Gastrocnemius medialis (tissue), 4 donors: ENCODE measurements at regions of chr20 and their contacts with region 1.

Region 1: GRCh38 chr20:2206957-2207769 is 88.6 kb upstream of the TGM3 start:
- DNase-seq: peak; percentile 18 to 30
- ATAC-seq: no peak
- H3K4me3 ChIP-seq: peak overlapping the region; percentile 47 to 63 (median 56)
- H3K27ac ChIP-seq: no peak overlapping the region
- H3K4me1 ChIP-seq: peaks cover 0 to 4% of the 10 kb centered on the region in 2 donors
- H3K27me3 ChIP-seq: peaks cover 20 to 30% (median 28%) of the 10 kb centered on the region in 3 donors
- CTCF ChIP-seq: peak; percentile 8 to 81 (median 57)
- POLR2A ChIP-seq: no peak

Region 2: DNA sequence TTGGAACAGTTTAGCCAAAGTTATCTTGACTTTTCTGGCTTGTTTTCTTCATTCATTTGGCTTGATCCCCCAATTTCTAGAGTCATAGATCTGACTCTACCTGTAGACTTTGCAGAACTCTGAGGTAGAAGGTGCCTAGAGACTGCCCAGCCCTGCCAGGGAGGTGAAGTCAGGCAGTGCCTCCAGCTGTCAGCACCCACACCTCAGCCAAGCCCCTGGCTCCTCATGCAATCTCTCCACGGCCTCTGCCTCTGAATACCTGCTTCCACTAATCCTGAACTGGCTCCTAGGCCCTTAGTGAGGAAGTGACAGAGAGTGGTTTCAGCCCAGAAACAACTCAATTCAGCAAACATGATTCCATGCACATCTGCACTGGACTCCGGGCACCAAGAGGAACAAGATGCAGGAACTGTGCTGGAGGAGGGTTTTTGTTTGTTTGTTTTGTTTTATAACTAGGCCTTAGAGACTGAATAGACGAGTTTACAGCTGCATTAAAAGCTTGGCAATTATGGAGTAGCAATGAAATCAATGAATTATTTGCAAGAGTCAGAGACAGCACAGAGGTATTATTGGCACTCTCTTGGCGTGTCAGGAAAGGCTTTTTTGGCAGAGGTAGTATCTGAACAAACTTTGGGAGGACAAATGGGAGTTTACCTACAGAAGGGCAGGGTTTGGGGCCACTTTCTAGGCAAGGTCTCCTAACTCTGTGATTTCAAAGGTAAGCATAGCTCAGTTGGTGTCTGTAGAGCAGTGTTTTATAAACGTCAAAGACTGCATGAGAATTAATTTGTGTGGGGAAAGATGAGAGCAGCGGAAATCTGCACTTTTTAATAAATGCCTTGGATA is 113.9 kb after region 1 on chr20:
- in situ Hi-C with region 1: no loop called
- intact Hi-C with region 1: no loop called
- DNase-seq: no peak
- ATAC-seq: no peak
- H3K4me3 ChIP-seq: no peak overlapping the region
- H3K27ac ChIP-seq: no peak overlapping the region
- H3K4me1 ChIP-seq: no peaks in the 10 kb centered on the region
- H3K27me3 ChIP-seq: no peaks in the 10 kb centered on the region
- CTCF ChIP-seq: no peak
- POLR2A ChIP-seq: no peak

Region 3: GRCh38 chr20:2446845-2447244 is 239.7 kb after region 1 on chr20:
- in situ Hi-C with region 1: loop called in 3 of 4 experiments (anchors 5 to 25 kb)
- intact Hi-C with region 1: loop called (anchors 1 kb)
- DNase-seq: no peak
- ATAC-seq: no peak
- H3K4me3 ChIP-seq: no peak overlapping the region
- H3K27ac ChIP-seq: no peak overlapping the region
- H3K4me1 ChIP-seq: no peaks in the 10 kb centered on the region
- H3K27me3 ChIP-seq: no peaks in the 10 kb centered on the region
- CTCF ChIP-seq: no peak
- POLR2A ChIP-seq: no peak

Region 4: DNA sequence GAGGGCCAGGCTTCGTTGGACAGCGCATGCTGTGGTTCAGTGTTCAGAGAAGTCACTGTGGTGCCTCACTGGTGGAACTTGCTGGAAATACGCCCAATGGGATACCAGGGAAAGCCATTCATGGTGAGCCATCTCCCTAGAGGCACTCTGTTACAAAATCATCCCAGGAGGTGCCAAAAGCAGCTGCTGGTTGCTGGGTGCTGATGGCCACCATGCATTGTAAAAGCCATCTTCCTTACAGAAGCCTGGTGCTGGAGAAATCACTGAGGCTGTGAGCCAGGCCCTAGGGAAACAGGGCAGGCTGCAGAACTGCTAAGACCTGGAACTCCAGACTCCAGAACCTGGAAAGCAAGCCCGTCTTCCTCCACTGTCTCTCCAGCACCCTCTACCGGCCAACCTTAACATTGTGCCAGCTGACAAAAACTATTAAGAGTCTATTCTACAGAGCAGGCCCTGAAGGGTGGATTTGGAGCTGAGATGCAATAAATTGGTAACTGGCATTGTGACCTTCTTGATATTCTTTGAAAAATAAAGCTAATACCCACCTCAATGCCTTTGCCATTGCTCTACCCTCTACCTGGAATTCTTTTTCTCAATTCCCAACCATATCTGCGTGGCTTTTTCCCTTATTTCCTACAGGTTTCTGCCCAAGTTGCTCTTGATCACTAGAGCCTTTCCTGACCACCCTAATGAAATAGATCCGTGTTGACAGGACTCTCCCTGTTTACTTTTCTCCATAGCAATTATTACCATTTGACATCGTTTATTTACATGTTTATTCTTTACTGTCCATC is 245.0 kb after region 1 on chr20:
- in situ Hi-C with region 1: loop called in 3 of 4 experiments (anchors 5 to 25 kb)
- intact Hi-C with region 1: loop called (anchors 1 kb)
- DNase-seq: peak; percentile 37 to 57
- ATAC-seq: peak; percentile 42 to 83
- H3K4me3 ChIP-seq: no peak overlapping the region
- H3K27ac ChIP-seq: no peak overlapping the region
- H3K4me1 ChIP-seq: no peaks in the 10 kb centered on the region
- H3K27me3 ChIP-seq: no peaks in the 10 kb centered on the region
- CTCF ChIP-seq: peak; percentile 51 to 82 (median 60)
- POLR2A ChIP-seq: no peak

Region 5: DNA sequence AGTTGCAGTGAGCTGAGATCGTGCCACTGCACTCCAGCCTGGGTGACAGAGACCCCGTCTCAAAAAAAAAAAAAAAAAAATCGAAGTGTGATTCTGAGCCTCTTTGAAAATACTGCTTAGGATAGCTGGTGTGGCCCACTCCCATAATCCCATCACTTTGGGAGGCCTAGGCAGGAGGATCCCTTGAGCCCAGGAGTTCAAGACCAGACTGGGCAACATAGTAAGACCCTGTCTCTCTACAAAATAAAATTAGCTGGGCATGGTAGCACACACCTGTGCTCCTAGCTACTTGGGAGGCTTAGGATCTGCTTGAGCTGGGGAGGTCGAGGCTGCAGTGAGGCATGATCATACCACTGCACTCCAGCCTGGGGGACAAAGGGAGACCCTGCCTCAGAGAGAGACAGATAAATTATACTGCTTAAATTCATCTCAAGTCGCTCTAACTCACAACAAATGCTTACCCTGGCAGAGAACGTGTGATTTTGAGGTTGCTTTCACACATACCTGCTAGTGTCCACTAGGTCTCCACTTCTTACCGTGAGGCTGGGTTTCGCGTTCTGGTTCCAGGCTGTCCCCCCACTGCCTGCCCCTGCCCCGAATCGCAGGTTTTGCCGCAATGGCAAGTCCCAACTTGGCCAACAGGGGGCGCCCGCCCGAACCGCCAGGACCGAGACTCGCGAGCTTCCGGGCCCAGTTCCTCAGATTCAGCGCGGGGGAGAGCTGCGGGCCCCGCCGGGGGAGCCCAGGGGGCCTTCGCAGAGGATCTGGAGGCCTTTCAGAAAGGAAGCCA is 317.0 kb after region 1 on chr20:
- in situ Hi-C with region 1: no loop called
- intact Hi-C with region 1: loop called (anchors 5 kb)
- DNase-seq: peak; percentile 53 to 64
- ATAC-seq: peak; percentile 74 to 75
- H3K4me3 ChIP-seq: peak overlapping the region; percentile 70 to 85 (median 80)
- H3K27ac ChIP-seq: peak overlapping the region; percentile 68 to 86 (median 82)
- H3K4me1 ChIP-seq: peaks cover 0 to 12% of the 10 kb centered on the region in 2 donors
- H3K27me3 ChIP-seq: peaks cover 0 to 4% (median 0%) of the 10 kb centered on the region in 3 donors
- CTCF ChIP-seq: peak; percentile 69 to 96 (median 89)
- POLR2A ChIP-seq: peak; percentile 50 to 56